Activated CD4-positive, alpha-beta memory T cell treated with anti-CD3 and anti-CD28 coated beads for 36 hours (primary cell): ENCODE measurements at regions of chr5 and their contacts with region 1.

Region 1: GRCh38 chr5:80204808-80205614 is 50.8 kb downstream of the SERINC5 start:
- DNase-seq: peak; percentile 33
- H3K4me3 Mint-ChIP-seq: peak overlapping the region; percentile 24
- H3K27ac Mint-ChIP-seq: peak overlapping the region; percentile 88
- H3K4me1 Mint-ChIP-seq: peaks cover 83% of the 10 kb centered on the region
- H3K27me3 Mint-ChIP-seq: no peaks in the 10 kb centered on the region

Region 2: DNA sequence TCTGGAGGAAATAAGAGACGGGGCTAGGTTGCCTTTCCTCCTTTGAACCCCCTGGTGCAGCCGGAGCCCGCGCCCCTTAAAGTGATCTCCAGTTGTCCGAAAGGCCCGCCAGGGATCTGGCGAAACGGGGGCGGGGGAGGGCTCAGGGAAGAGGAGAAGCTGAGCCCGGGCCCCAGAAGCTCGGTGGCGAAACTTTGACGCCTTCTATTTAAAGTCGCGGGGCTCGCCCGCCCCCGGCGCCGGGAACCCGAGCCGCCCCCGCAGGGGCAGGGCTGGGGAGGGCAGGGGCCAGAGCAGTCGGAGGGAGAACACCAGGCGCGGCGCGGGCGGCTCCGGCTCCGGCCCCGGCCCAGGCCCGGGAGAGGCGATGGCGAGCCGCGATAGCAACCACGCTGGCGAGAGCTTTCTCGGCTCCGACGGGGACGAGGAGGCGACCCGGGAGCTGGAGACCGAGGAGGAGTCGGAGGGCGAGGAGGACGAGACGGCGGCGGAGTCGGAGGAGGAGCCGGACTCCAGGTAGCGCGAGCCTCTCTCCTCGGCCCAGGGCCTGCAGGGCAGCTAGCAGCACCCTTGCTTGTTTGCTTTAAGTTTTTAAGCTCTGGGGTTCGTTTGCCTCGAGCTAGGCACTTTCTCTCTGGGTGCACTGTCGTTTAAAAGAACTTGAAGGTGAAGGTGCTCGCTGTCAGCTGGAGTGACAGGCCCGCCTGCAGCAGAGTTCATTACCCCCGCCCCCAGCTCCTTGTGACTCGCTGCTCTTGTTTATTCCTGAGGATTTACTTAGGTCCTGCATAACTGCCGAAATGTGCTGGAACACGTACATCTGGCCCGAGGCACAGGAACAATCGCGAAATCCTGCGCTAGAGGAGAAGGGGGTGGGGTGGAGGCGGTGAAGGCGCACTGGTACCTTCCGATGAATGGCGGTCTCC is 515.2 kb before region 1 on chr5 and contains the start of gene CMYA5:
- CTCF ChIA-PET with region 1: no interaction called
- POLR2A ChIA-PET with region 1: no interaction called
- intact Hi-C with region 1: no loop called
- DNase-seq: no peak
- H3K4me3 Mint-ChIP-seq: no peak within 1 kb of the TSS
- H3K27ac Mint-ChIP-seq: no peak within 1 kb of the TSS
- H3K4me1 Mint-ChIP-seq: peaks cover 9% of the 10 kb centered on the region
- H3K27me3 Mint-ChIP-seq: no peaks in the 10 kb centered on the region
- total RNA-seq, gene CMYA5: 0.15 to 0.26 TPM

Region 3: DNA sequence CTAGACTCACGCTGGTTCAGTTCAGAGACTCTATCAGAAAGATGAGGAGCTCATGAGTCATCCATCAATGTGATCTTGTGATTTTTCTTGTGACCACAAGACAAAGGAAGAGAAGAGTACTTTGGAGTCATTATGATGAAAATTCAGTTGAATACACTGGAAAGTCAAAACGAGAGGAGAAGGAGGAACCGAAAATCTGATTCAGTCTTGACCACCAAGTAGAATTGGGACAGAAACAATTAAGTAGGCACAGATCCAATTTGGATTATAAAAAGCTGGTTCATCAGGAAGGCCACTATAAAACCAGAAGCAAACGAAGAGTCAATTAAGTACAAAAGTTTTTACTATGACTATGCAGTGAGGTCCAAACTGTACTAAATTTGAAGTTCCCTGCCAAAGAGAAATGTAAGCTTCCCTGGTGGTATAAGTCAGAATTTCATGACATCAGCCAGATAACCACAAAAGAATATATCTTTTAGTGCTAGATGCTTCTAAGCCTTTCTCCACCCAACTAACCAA is 79.0 kb before region 1 on chr5:
- CTCF ChIA-PET with region 1: interaction called, 10 read pairs
- POLR2A ChIA-PET with region 1: interaction called, 6 read pairs
- intact Hi-C with region 1: loop called (anchors 1 kb)
- DNase-seq: peak; percentile 28
- H3K4me3 Mint-ChIP-seq: peak overlapping the region; percentile 51
- H3K27ac Mint-ChIP-seq: peak overlapping the region; percentile 70
- H3K4me1 Mint-ChIP-seq: peaks cover 52% of the 10 kb centered on the region
- H3K27me3 Mint-ChIP-seq: no peaks in the 10 kb centered on the region

Region 4: DNA sequence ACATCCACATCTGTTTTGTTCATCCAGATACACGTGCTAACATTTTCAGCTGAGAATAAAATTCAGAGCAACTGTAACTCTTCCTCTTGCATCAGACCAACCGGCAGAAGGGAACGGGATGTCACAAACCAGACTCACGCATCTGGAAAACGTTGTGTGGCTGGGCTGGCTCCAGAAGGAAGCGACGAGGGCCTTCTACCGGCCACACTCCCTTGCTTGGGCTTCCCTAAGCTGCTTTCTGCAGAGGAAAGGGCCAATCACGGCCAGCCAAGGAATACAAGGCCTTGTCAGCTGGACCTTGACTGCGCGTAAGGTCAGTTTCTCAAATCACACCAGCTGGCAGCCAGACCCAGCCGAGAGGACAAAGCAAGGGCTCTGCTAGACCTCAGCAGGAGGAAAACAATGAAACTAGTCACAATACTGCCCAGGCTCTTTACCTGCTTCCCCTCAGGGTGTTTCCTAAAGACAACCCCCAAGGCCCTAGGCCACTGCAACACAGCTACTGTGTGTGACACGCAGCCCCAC is 63.8 kb before region 1 on chr5:
- CTCF ChIA-PET with region 1: interaction called, 3 read pairs
- POLR2A ChIA-PET with region 1: interaction called, 3 read pairs
- intact Hi-C with region 1: loop called (anchors 2 kb)
- DNase-seq: no peak
- H3K4me3 Mint-ChIP-seq: peak overlapping the region; percentile 40
- H3K27ac Mint-ChIP-seq: peak overlapping the region; percentile 87
- H3K4me1 Mint-ChIP-seq: peaks cover 77% of the 10 kb centered on the region
- H3K27me3 Mint-ChIP-seq: no peaks in the 10 kb centered on the region

Region 5: GRCh38 chr5:80165452-80165851 is 39.6 kb before region 1 on chr5:
- CTCF ChIA-PET with region 1: no interaction called
- POLR2A ChIA-PET with region 1: no interaction called
- intact Hi-C with region 1: no loop called
- DNase-seq: no peak
- H3K4me3 Mint-ChIP-seq: no peak overlapping the region
- H3K27ac Mint-ChIP-seq: peak overlapping the region; percentile 49
- H3K4me1 Mint-ChIP-seq: peaks cover 60% of the 10 kb centered on the region
- H3K27me3 Mint-ChIP-seq: no peaks in the 10 kb centered on the region

Region 6: DNA sequence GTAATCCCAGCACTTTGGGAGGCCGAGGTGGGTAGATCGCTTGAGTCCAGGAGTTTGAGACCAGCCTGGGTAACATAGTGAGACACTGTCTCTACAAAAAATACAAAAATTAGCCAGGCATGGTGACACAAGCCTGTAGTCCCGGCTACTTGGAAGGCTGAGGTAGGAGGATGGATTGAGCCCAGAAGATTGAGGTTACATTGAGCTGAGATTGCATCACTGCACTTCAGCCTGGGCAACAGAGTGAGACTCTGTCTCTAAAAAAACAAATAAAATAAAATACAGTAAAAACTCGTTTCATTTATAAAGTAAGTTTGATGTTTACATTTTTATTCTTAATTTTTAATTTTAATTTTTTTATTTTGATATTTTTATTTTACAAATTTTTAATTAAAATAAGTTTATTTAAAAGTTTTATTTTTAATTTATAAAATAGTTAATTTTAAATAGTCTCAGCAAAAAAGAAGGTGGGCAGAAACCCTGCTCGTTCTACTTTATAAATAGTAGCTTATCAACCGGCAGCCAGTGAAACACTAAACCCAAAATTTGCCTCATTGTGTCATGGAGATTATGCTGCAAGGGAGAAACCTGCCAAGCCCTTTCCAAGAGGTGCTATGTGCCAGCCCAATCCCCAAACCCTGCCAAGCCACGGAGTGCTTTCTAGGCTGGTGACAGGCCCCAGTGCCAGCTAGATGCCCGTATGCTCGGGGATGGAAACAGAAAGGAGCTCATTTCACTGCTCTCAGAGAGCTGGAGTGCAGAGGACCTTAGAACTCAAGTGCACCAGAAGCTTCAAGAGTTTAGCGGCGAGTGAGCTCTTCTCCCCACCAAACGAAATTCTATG is 12.0 kb after region 1 on chr5:
- CTCF ChIA-PET with region 1: interaction called, 6 read pairs
- POLR2A ChIA-PET with region 1: interaction called, 16 read pairs
- intact Hi-C with region 1: no loop called
- DNase-seq: peak; percentile 64
- H3K4me3 Mint-ChIP-seq: peak overlapping the region; percentile 73
- H3K27ac Mint-ChIP-seq: peak overlapping the region; percentile 91
- H3K4me1 Mint-ChIP-seq: peaks cover 85% of the 10 kb centered on the region
- H3K27me3 Mint-ChIP-seq: no peaks in the 10 kb centered on the region

Region 7: DNA sequence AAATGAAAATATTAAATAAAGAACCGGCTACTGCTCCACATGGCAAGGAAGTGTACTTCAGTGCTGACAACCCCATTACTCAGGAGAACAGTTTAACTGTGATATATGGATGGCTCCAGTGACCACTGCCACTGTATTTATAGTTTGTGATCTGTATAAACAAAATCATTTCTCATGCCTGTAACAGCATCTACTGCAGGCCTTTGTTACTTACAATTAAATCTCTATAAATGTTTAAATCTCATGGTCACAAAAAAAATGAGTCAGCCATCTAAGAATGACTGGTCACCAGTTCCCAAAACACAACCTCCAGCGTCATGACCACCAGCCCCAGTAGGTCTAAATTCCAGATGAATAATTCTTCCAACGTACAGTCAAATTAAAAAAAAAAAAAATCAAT is 26.2 kb after region 1 on chr5:
- CTCF ChIA-PET with region 1: no interaction called
- POLR2A ChIA-PET with region 1: interaction called, 6 read pairs
- intact Hi-C with region 1: loop called (anchors 1 kb)
- DNase-seq: peak; percentile 55
- H3K4me3 Mint-ChIP-seq: no peak overlapping the region
- H3K27ac Mint-ChIP-seq: peak overlapping the region; percentile 67
- H3K4me1 Mint-ChIP-seq: peaks cover 73% of the 10 kb centered on the region
- H3K27me3 Mint-ChIP-seq: no peaks in the 10 kb centered on the region

Region 8: GRCh38 chr5:80246001-80246758 is 41.2 kb after region 1 on chr5:
- CTCF ChIA-PET with region 1: interaction called, 3 read pairs
- POLR2A ChIA-PET with region 1: interaction called, 3 read pairs
- intact Hi-C with region 1: loop called (anchors 2 kb)
- DNase-seq: no peak
- H3K4me3 Mint-ChIP-seq: peak overlapping the region; percentile 14
- H3K27ac Mint-ChIP-seq: peak overlapping the region; percentile 72
- H3K4me1 Mint-ChIP-seq: peaks cover 66% of the 10 kb centered on the region
- H3K27me3 Mint-ChIP-seq: no peaks in the 10 kb centered on the region